Heart left ventricle (tissue), 16 donors: ENCODE measurements at regions of chr15 and their contacts with region 1.

Region 1: GRCh38 chr15:66497502-66498455 is at the start of gene SNAPC5:
- DNase-seq: peak; percentile 96 to 98 (median 98)
- ATAC-seq: peak; percentile 95 to 99 (median 96)
- H3K4me3 ChIP-seq: peak within 1 kb of the TSS; percentile 58 to 97 (median 88)
- H3K27ac ChIP-seq: peak within 1 kb of the TSS; percentile 55 to 92 (median 85)
- H3K4me1 ChIP-seq: peaks cover 4 to 53% (median 23%) of the 10 kb centered on the region in 12 donors
- H3K27me3 ChIP-seq: no peaks in the 10 kb centered on the region
- CTCF ChIP-seq: peak; percentile 96 to 100 (median 99)
- POLR2A ChIP-seq: peak in 1 of 2 donors; percentile 66
- total RNA-seq, gene SNAPC5: 25.4 to 38.6 (median 28.3) TPM

Region 2: DNA sequence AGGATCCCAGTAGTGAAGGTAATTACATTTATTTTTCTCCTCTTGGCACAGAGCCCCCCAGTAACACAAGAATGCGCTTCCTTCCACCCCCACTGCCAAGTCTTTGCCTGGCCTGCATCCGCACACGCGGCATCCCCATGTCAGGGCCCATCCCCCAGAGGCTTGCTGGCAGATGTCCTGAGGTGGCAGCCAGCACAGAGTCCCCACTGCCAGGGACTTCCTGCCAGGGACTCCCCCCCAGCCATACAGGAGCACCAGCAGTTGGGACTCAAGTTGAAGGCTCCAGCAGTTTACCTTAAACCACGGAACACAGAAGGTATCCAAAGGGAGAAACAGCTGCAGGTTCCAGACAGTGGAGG is 285.2 kb before region 1 on chr15:
- intact Hi-C with region 1: no loop called
- DNase-seq: no peak
- ATAC-seq: peak in 1 of 4 donors; percentile 31
- H3K4me3 ChIP-seq: no peak overlapping the region
- H3K27ac ChIP-seq: no peak overlapping the region
- H3K4me1 ChIP-seq: no peaks in the 10 kb centered on the region
- H3K27me3 ChIP-seq: no peaks in the 10 kb centered on the region
- CTCF ChIP-seq: no peak
- POLR2A ChIP-seq: no peak

Region 3: DNA sequence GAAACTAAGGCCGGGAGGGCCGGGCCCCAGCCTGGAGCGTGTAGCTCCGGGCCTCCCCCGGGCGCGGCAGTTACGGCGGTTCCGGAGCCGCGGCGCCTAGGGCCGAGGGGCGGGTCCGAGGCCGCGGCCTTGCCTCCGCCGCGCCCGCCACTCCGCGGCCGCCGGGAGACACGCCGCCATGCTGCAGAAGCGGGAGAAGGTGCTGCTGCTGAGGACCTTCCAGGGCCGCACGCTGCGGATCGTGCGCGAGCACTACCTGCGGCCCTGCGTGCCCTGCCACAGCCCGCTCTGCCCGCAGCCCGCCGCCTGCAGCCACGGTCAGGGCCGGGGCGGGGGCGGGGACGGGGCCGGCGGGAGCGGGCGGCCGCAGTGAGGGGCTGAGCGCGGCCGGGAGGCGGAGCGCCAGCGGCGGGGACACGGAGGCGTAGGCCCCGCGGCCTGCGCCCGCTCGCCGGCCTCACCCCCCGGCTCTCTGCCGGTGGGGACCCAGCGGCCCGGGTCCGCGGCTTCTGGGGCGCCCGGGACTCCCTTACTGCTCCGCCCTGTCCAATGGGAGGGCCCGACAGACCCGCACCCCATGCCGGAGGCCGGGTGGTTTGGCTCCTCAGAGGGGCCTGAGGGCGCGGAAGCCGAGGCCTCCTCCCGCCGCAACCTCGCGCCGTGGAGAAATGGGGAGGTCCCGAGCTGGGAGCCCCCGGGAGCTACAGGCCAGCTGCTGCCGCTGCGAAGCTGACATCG is 204.2 kb before region 1 on chr15 and contains the start of gene DIS3L:
- intact Hi-C with region 1: loop called in 2 of 10 experiments (anchors 5 kb)
- DNase-seq: peak; percentile 54 to 82 (median 70)
- ATAC-seq: peak; percentile 57 to 94 (median 87)
- H3K4me3 ChIP-seq: peak within 1 kb of the TSS; percentile 59 to 96 (median 80)
- H3K27ac ChIP-seq: peak within 1 kb of the TSS; percentile 85 to 95 (median 92)
- H3K4me1 ChIP-seq: peaks cover 4 to 37% (median 19%) of the 10 kb centered on the region in 12 donors
- H3K27me3 ChIP-seq: no peaks in the 10 kb centered on the region
- CTCF ChIP-seq: peak in 3 of 12 donors; percentile 10 to 13 (median 10)
- POLR2A ChIP-seq: peak in 1 of 2 donors; percentile 60
- total RNA-seq, gene DIS3L: 26.7 to 62.5 (median 35.7) TPM

Region 4: GRCh38 chr15:66356345-66357236 is 141.2 kb before region 1 on chr15 and contains the start of gene TIPIN:
- intact Hi-C with region 1: loop called in 3 of 10 experiments (anchors 1 to 10 kb)
- DNase-seq: peak; percentile 95 to 99 (median 96)
- ATAC-seq: peak; percentile 98 to 99 (median 99)
- H3K4me3 ChIP-seq: peak within 1 kb of the TSS; percentile 42 to 76 (median 62)
- H3K27ac ChIP-seq: peak within 1 kb of the TSS in 10 of 12 donors; percentile 32 to 84 (median 63)
- H3K4me1 ChIP-seq: peaks cover 0 to 11% (median 6%) of the 10 kb centered on the region in 12 donors
- H3K27me3 ChIP-seq: no peaks in the 10 kb centered on the region
- CTCF ChIP-seq: no peak
- POLR2A ChIP-seq: peak in 1 of 2 donors; percentile 45
- total RNA-seq, gene TIPIN: 1.9 to 6.2 (median 3.8) TPM

Region 5: GRCh38 chr15:66545249-66545648 is 47.5 kb after region 1 on chr15:
- intact Hi-C with region 1: no loop called
- DNase-seq: no peak
- ATAC-seq: no peak
- H3K4me3 ChIP-seq: no peak overlapping the region
- H3K27ac ChIP-seq: no peak overlapping the region
- H3K4me1 ChIP-seq: no peaks in the 10 kb centered on the region
- H3K27me3 ChIP-seq: no peaks in the 10 kb centered on the region
- CTCF ChIP-seq: no peak
- POLR2A ChIP-seq: no peak